Esophagus squamous epithelium (tissue), 5 donors: ENCODE measurements at regions of chr6 and their contacts with region 1.

Region 1: DNA sequence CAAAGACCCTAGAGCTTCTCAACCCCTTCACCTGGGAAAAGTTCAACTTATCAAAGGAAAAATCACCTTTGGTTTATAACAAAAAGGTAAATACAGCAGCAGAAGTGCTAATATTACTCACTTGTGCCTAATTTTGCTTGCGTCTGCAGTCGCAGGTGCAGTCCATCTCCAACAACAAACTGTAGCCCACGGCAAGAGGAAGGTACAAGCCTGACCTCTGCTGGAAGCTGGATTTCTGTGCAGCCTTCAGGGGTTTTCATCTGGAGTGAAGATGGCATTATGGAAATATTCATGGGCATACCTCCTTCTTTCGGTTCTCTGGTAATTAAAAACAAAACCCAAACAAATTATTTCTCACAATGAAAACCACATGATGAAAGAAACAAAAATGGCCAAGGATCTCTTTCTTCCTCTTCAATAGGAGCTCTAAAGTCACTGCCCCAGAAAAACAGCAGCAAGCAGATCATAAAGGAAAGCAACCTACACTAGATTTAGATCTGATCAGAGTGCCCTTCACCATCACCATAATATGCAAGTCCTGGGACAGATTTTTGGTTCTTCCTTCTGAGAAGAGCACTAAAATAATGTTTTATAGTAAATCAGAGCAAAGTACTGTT is 7.8 kb downstream of the UBE3D start:
- DNase-seq: no peak
- H3K4me3 ChIP-seq: no peak overlapping the region
- H3K27ac ChIP-seq: no peak overlapping the region
- H3K4me1 ChIP-seq: no peaks in the 10 kb centered on the region
- H3K27me3 ChIP-seq: no peaks in the 10 kb centered on the region
- CTCF ChIP-seq: peak in 5 of 6 experiments; percentile 44 to 61 (median 53)
- POLR2A ChIP-seq: no peak

Region 2: GRCh38 chr6:82251942-82252341 is 805.9 kb before region 1 on chr6:
- intact Hi-C with region 1: loop called (anchors 5 kb)
- DNase-seq: no peak
- H3K4me3 ChIP-seq: no peak overlapping the region
- H3K27ac ChIP-seq: no peak overlapping the region
- H3K4me1 ChIP-seq: peaks cover 0 to 15% (median 10%) of the 10 kb centered on the region in 3 donors
- H3K27me3 ChIP-seq: no peaks in the 10 kb centered on the region
- CTCF ChIP-seq: peak in 4 of 6 experiments; percentile 18 to 53 (median 46)
- POLR2A ChIP-seq: no peak

Region 3: DNA sequence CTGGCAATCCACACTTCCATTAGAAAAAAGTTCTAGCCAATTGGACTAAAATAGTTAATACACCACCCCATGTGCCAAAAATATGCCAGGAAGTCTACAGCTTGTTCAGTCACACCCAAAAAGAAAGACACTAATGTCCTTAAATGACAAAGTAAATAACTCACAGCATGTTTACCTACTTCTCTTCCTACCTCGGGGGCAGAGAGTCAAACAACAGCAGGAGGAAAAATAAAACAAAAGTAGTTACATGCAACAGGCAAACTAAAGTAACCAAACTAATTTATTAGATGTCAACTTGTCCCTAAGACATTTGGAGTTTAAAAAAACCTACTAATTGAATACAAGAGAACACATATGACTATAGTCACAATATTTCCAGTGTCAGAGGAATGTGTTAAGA is 49.1 kb before region 1 on chr6:
- intact Hi-C with region 1: no loop called
- DNase-seq: no peak
- H3K4me3 ChIP-seq: no peak overlapping the region
- H3K27ac ChIP-seq: no peak overlapping the region
- H3K4me1 ChIP-seq: peaks cover 0 to 9% (median 0%) of the 10 kb centered on the region in 3 donors
- H3K27me3 ChIP-seq: no peaks in the 10 kb centered on the region
- CTCF ChIP-seq: no peak
- POLR2A ChIP-seq: no peak

Region 4: DNA sequence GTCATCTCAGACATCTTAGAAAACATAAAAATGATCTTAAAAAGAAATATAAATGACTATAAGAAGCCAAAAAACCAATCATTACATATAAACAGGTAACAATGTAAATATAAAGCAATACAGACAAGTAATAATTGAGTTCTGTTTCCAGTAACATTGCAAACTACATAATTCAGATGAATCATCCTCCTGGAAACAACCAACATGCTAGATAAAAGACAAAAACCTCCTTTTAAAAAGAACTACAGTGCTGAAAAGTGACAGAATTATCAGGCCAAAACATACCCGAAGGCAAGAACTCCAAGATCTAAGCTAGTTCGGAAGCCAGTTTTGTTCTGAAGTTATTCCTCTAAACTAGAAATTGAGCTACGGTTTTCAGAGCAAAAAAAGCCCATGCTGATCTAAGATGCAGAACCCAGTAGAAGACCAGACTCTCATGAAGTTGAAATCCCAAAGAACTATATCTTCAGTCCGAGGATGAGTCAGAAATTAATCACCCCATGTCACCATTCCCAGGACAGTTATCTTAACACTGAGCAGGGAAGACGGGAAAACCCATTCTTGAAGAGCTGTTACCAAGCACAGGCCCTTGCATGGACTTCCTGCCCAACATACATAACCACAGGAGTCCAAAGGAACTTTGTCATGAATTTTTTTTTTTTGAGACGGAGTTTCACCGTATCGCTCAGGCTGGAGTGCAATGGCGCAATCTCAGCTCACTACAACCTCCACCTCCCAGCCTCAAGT is 125.4 kb after region 1 on chr6:
- intact Hi-C with region 1: no loop called
- DNase-seq: no peak
- H3K4me3 ChIP-seq: no peak overlapping the region
- H3K27ac ChIP-seq: no peak overlapping the region
- H3K4me1 ChIP-seq: no peaks in the 10 kb centered on the region
- H3K27me3 ChIP-seq: no peaks in the 10 kb centered on the region
- CTCF ChIP-seq: no peak
- POLR2A ChIP-seq: no peak